Gastrocnemius medialis (tissue), 4 donors: ENCODE measurements at regions of chr16 and their contacts with region 1.

Region 1: GRCh38 chr16:27374804-27375425 is 27.1 kb upstream of the IL21R start:
- DNase-seq: peak in 1 of 2 donors; percentile 35
- ATAC-seq: peak; percentile 26 to 55
- H3K4me3 ChIP-seq: no peak overlapping the region
- H3K27ac ChIP-seq: no peak overlapping the region
- H3K4me1 ChIP-seq: no peaks in the 10 kb centered on the region
- H3K27me3 ChIP-seq: no peaks in the 10 kb centered on the region
- CTCF ChIP-seq: peak in 2 of 5 experiments; percentile 17 to 28
- POLR2A ChIP-seq: peak; percentile 7 to 8

Region 2: DNA sequence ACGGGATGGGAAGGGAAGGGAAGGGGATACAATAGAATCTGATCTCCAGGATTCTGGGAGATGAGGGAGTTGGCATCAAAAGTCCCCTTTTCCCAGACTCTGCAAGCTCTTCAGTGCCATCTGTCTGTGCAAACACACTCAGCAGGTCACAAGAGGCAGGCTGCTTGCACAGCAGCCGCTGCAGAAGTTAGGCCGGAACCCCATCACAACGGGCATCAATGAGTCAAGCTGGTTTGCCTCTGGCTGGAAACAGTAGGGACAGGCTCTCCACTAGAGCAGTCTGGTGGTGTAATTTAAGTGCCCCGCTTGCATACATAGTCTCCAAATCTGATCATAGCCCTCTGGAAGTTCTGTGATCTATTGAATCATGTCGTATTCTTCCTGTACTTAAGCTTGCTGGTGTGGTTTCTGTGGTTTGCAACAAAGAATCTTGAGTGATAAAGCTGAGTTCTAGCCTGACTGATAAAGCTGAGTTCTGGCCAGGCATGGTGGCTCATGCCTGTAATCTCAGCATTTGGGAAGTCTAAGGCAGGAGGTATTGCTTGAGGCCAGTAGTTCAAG is 205.3 kb before region 1 on chr16:
- in situ Hi-C with region 1: loop called in 2 of 4 experiments (anchors 10 kb)
- intact Hi-C with region 1: no loop called
- DNase-seq: no peak
- ATAC-seq: no peak
- H3K4me3 ChIP-seq: no peak overlapping the region
- H3K27ac ChIP-seq: no peak overlapping the region
- H3K4me1 ChIP-seq: no peaks in the 10 kb centered on the region
- H3K27me3 ChIP-seq: peaks cover 0 to 4% (median 0%) of the 10 kb centered on the region in 3 donors
- CTCF ChIP-seq: no peak
- POLR2A ChIP-seq: no peak